Right ventricle myocardium superior (tissue), 1 donor: ENCODE measurements at regions of chrX and their contacts with region 1.

Region 1: DNA sequence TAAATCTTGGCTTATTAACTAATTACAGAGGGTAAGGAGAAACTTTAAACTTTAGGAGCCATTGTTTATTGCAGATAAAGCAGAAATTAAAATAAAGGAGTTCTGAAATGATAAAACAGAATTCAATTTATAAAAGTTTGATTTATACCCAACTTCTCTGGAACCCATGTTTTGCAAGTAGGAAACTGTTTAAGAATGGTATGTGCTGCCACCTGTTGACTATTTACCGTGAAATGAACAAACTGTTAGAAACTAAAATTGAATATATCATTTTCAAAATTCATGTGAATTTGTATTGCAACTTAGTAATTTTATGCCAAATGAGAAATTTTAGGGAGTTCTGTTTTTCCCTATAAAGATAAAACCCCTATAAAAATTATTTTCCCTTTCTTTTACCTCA is 11.0 kb upstream of the TBC1D8B start:
- DNase-seq: no peak
- ATAC-seq: no peak

Region 2: DNA sequence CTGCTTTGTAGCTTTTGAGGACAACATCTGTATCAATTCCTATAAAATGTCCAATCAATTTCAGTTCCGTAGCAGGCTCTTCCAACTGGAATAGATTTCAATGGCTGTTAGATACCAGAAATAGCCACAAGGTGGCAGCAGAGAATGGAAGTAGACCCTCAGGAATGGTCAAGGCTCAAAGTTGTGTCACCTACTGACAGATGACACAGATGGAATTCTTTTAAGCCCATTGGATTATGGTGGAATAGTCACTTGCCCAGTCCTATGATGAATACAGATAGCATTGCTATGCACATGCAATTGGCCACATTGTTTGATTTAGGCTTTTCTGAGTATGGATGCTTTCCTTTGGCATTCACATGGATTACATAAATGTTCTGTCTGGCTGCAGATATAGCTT is 310.2 kb before region 1 on chrX:
- intact Hi-C with region 1: loop called (anchors 10 kb)
- DNase-seq: no peak
- ATAC-seq: peak; percentile 48

Region 3: DNA sequence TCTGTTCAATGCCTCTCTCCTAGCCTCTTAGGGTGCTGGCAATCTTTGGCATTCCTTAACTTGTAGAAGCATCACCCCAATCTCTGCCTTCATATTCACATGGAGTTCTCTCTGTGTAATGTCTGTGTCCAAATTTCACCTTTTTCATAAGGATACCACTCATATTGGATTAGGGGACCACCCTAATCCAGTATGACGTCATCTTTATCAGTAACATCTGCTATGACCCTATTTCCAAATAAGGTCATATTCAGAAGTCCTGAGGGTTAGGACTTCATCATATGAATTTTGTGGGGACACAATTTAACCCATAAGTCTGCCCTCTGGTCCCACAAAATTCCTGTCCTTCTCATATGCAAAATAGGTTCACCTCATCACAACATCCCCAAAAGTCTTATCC is 150.5 kb before region 1 on chrX:
- intact Hi-C with region 1: no loop called
- DNase-seq: no peak
- ATAC-seq: no peak

Region 4: GRCh38 chrX:106752086-106752678 is 39.3 kb before region 1 on chrX:
- intact Hi-C with region 1: no loop called
- DNase-seq: no peak
- ATAC-seq: no peak

Region 5: DNA sequence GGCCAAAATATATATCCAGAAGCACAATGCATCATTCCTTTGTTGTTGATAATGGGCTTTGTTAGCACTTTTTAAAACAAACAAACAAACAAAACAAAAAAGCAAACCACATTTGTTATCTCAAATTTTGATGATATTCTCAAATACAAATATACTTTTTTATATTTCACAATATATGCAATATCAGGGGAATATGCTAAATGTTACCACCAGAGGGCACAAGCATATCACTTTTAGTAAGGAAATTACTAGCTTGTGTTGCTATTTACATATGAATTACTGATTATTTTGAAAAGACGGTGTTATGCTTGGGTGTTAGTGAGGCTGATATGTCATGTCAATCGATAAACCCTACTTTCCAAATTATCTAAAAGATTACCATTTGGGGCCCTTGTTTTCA is 82.6 kb after region 1 on chrX:
- intact Hi-C with region 1: no loop called
- DNase-seq: no peak
- ATAC-seq: no peak

Region 6: GRCh38 chrX:107199491-107199890 is 408.0 kb after region 1 on chrX:
- intact Hi-C with region 1: no loop called
- DNase-seq: no peak
- ATAC-seq: no peak